Mammary epithelial cell (primary cell): ENCODE measurements at regions of chr13 and their contacts with region 1.

Region 1: GRCh38 chr13:95754069-95754468 is 77.1 kb downstream of the DNAJC3 start:
- DNase-seq: no peak
- H3K4me3 ChIP-seq: no peak overlapping the region
- H3K27ac ChIP-seq: no peak overlapping the region
- H3K4me1 ChIP-seq: peaks cover 3% of the 10 kb centered on the region
- H3K27me3 ChIP-seq: no peaks in the 10 kb centered on the region
- CTCF ChIP-seq: no peak

Region 2: DNA sequence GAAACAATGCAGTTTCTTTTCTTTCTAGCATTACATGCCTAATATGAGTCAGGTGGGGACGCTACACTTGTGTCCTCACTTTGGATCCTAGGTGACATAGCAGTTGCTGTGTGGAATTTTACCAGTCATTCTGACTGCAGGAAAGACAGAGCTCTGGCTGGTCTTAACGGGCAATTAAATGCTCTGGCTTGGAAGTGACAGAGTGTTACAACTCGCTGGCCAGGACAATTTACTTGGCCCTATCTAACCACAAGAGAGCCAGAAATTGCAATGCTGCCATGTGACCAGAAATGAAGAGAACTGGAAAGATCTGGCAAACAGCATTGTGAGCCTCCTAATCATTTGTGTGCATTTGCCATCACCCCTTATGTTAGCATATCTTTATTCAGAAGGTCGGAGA is 1625.6 kb before region 1 on chr13:
- CTCF ChIA-PET with region 1: no interaction called
- dilution Hi-C with region 1: no loop called
- in situ Hi-C with region 1: no loop called
- intact Hi-C with region 1: no loop called
- DNase-seq: no peak
- H3K4me3 ChIP-seq: no peak overlapping the region
- H3K27ac ChIP-seq: no peak overlapping the region
- H3K4me1 ChIP-seq: no peaks in the 10 kb centered on the region
- H3K27me3 ChIP-seq: no peaks in the 10 kb centered on the region
- CTCF ChIP-seq: no peak

Region 3: GRCh38 chr13:95698047-95698749 is 55.9 kb before region 1 on chr13:
- CTCF ChIA-PET with region 1: no interaction called
- dilution Hi-C with region 1: loop called (anchors 5 kb)
- in situ Hi-C with region 1: no loop called
- intact Hi-C with region 1: no loop called
- DNase-seq: peak; percentile 40
- H3K4me3 ChIP-seq: no peak overlapping the region
- H3K27ac ChIP-seq: no peak overlapping the region
- H3K4me1 ChIP-seq: no peaks in the 10 kb centered on the region
- H3K27me3 ChIP-seq: no peaks in the 10 kb centered on the region
- CTCF ChIP-seq: peak; percentile 43 to 54